Heart left ventricle (tissue), 16 donors: ENCODE measurements at regions of chrX and their contacts with region 1.

Region 1: GRCh38 chrX:46545111-46546005 is at the start of gene ZNF674:
- DNase-seq: peak; percentile 91 to 97 (median 94)
- ATAC-seq: peak; percentile 92 to 98 (median 94)
- H3K4me3 ChIP-seq: peak within 1 kb of the TSS; percentile 37 to 92 (median 78)
- H3K27ac ChIP-seq: peak within 1 kb of the TSS in 11 of 12 donors; percentile 41 to 89 (median 83)
- H3K4me1 ChIP-seq: peaks cover 0 to 23% (median 8%) of the 10 kb centered on the region in 12 donors
- H3K27me3 ChIP-seq: peaks cover 0 to 5% (median 0%) of the 10 kb centered on the region in 9 donors
- CTCF ChIP-seq: peak in 11 of 12 donors; percentile 10 to 48 (median 26)
- POLR2A ChIP-seq: peak in 1 of 2 donors; percentile 60
- total RNA-seq, gene ZNF674: 0.81 to 5.6 (median 3.8) TPM

Region 2: GRCh38 chrX:46446727-46447378 is 98.5 kb before region 1 on chrX:
- intact Hi-C with region 1: loop called in 1 of 10 experiments (anchors 5 kb)
- DNase-seq: peak; percentile 89 to 93 (median 89)
- ATAC-seq: peak; percentile 96 to 100 (median 97)
- H3K4me3 ChIP-seq: peak overlapping the region; percentile 39 to 97 (median 74)
- H3K27ac ChIP-seq: peak overlapping the region; percentile 53 to 91 (median 86)
- H3K4me1 ChIP-seq: peaks cover 0 to 16% (median 2%) of the 10 kb centered on the region in 12 donors
- H3K27me3 ChIP-seq: no peaks in the 10 kb centered on the region
- CTCF ChIP-seq: no peak
- POLR2A ChIP-seq: peak in 1 of 2 donors; percentile 53

Region 3: GRCh38 chrX:46485897-46486296 is 59.5 kb before region 1 on chrX:
- intact Hi-C with region 1: no loop called
- DNase-seq: no peak
- ATAC-seq: no peak
- H3K4me3 ChIP-seq: no peak overlapping the region
- H3K27ac ChIP-seq: no peak overlapping the region
- H3K4me1 ChIP-seq: no peaks in the 10 kb centered on the region
- H3K27me3 ChIP-seq: no peaks in the 10 kb centered on the region
- CTCF ChIP-seq: no peak
- POLR2A ChIP-seq: no peak

Region 4: DNA sequence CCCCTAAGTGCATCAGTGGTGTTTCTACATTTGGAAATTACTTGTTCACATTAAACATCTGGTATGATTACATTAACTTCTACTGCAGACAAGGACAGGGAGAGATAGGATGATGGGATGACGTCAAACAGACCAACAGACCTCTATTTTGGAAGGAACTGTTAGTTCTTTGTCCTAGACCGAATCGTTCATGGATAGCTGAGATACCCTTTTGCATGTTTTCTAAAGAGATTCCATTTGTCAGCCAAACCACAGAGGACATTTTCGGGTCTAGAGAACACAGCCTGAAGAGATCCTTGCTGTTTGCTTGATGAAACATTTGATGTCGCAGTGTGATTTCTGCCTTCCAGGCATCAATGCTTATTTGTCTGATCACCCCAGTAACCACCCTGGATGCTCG is 55.9 kb after region 1 on chrX:
- intact Hi-C with region 1: no loop called
- DNase-seq: no peak
- ATAC-seq: peak; percentile 82 to 92 (median 88)
- H3K4me3 ChIP-seq: no peak overlapping the region
- H3K27ac ChIP-seq: peak overlapping the region in 10 of 12 donors; percentile 23 to 69 (median 50)
- H3K4me1 ChIP-seq: peaks cover 0 to 43% (median 14%) of the 10 kb centered on the region in 12 donors
- H3K27me3 ChIP-seq: no peaks in the 10 kb centered on the region
- CTCF ChIP-seq: no peak
- POLR2A ChIP-seq: no peak